A673 (cell line): ENCODE measurements at regions of chr9 and their contacts with region 1.

Region 1: GRCh38 chr9:136769710-136770191 is 5.4 kb upstream of the LCN15 start:
- DNase-seq: peak; percentile 73
- H3K4me3 ChIP-seq: peak overlapping the region; percentile 44
- H3K27ac ChIP-seq: no peak overlapping the region
- H3K4me1 ChIP-seq: no peaks in the 10 kb centered on the region
- H3K27me3 ChIP-seq: no peaks in the 10 kb centered on the region
- CTCF ChIP-seq: peak; percentile 65

Region 2: DNA sequence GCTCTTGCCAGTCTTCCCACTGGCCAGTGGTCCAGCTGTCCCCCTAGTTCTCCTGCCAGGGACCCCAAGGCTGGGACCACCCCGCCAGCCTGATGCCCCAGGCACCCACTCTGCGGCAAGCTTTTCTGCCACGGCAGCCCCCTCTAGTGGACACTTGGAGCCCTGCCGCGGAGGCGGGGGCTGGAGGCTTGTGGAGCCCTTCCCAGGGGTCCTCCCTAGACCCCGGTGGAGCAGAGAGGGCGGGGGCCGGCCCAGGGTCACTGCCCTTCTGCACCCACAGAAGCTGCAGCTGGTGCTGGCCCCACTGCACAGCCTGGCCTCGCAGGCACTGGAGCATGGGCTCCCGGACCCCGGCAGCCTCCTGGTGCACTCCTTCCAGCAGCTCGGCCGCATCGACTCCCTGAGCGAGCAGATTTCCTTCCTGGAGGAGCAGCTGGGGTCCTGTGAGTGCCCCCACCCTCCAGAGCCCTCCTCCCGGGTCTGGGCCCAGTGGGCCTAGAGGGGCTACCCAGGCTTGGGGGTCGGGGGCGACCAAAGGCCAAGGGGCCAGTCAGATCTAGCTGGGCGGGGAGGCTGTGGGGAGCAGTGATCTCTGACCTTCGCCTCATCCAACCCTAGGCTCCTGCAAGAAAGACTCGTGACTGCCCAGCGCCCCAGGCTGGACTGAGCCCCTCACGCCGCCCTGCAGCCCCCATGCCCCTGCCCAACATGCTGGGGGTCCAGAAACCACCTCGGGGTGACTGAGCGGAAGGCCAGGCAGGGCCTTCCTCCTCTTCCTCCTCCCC is 97.9 kb before region 1 on chr9:
- CTCF ChIA-PET with region 1: no interaction called
- POLR2A ChIA-PET with region 1: no interaction called
- intact Hi-C with region 1: no loop called
- DNase-seq: peak; percentile 64
- H3K4me3 ChIP-seq: no peak overlapping the region
- H3K27ac ChIP-seq: no peak overlapping the region
- H3K4me1 ChIP-seq: peaks cover 25% of the 10 kb centered on the region
- H3K27me3 ChIP-seq: no peaks in the 10 kb centered on the region
- CTCF ChIP-seq: peak; percentile 95

Region 3: DNA sequence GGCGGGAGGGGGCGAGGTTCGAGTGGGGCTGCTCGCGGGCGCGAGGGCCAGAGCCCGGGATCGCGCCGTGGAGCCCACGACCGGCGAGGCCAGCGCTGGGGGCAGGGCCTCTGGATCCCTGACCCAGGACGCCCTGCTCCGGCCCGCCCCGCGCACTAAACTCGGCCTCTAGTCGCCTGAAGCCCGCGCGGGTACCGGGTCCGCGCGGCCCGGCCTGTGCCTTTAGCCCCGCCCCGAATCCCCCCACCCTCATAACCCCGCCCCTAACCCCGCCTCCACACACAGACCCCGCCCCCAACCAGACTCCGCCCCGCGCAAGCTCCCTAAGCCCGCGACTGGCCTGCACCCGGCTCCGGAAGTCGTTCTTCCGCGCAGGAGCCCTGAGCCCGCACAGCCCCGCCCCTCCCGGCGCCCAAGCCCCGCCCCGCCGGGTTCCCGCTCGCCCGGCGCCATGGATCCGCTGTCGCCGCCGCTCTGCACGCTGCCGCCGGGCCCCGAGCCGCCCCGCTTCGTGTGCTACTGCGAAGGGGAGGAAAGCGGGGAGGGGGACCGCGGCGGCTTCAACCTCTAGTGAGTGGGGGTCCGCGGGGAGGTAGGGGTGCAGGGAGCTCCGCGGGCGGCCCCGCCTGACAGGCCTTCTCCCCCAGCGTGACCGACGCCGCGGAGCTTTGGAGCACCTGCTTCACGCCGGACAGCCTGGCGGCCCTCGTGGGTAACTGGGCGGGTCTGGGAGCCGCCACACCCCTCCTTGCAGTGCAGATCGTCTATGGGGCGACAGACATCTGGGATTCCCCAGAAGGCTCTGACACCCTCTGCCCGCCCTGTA is 222.5 kb after region 1 on chr9 and contains the start of gene PAXX:
- CTCF ChIA-PET with region 1: interaction called, 14 read pairs
- POLR2A ChIA-PET with region 1: no interaction called
- intact Hi-C with region 1: no loop called
- DNase-seq: peak; percentile 94
- H3K4me3 ChIP-seq: peak within 1 kb of the TSS; percentile 75
- H3K27ac ChIP-seq: peak within 1 kb of the TSS; percentile 88
- H3K4me1 ChIP-seq: peaks cover 26% of the 10 kb centered on the region
- H3K27me3 ChIP-seq: no peaks in the 10 kb centered on the region
- CTCF ChIP-seq: no peak
- total RNA-seq, gene PAXX: 91.5 and 99.5 TPM in 2 replicates

Region 4: GRCh38 chr9:137574192-137574591 is 804.4 kb after region 1 on chr9:
- CTCF ChIA-PET with region 1: interaction called, 10 read pairs
- POLR2A ChIA-PET with region 1: no interaction called
- intact Hi-C with region 1: no loop called
- DNase-seq: no peak
- H3K4me3 ChIP-seq: no peak overlapping the region
- H3K27ac ChIP-seq: no peak overlapping the region
- H3K4me1 ChIP-seq: peaks cover 17% of the 10 kb centered on the region
- H3K27me3 ChIP-seq: no peaks in the 10 kb centered on the region
- CTCF ChIP-seq: no peak